ENCODE measurements at regions of chr9 and their contacts with region 1.

Region 1: DNA sequence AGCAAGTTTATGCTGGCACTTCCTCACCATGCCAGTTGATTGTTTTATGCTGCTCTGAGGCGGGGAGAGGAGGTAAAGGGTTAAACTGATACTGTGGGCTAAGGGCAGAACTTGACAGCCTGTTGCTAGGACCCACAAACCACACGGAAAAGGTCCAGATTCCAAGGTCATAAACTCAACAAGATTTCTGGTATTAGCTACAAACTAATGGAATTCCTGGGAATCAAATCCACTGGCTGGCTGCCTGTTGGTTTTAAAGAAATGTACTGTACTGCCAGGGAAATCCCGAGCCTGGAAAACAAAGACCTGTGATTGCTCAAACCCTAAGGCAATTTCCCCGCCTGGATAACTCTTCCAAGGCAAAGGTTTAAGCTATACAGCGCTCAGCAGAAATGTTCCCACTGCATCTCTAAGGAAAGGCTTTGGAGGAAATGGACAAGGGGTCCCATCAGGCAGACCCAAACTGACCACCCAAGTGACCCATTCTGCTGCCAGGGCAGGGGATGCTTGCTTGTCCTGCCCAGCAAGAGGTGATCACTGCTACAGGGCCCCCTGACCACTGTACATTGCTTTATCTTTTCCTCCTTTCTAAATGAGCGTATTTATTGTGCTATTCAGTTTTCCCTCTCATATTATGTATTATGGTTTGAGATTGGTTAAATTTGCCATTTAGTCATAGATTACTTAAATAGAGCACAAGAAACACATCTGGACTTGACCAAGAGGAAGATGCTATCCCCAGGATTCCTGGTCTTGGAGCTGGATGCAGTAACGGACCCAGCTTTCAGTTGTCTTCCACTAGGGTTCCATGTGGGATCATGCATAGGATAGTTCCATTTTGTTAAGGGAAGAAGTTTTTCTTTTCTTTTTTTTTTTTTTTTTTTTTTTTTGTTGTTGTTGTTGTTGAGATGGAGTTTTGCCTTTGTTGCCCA is 124.3 kb downstream of the SUSD1 start:
- DNase-seq: no peak
- CTCF ChIP-seq: no peak

Region 2: GRCh38 chr9:112028280-112029221 is 22.3 kb before region 1 on chr9:
- CTCF ChIA-PET with region 1: interaction called, 8 read pairs
- POLR2A ChIA-PET with region 1: interaction called, 12 read pairs
- DNase-seq: peak; percentile 57
- CTCF ChIP-seq: no peak

Region 3: DNA sequence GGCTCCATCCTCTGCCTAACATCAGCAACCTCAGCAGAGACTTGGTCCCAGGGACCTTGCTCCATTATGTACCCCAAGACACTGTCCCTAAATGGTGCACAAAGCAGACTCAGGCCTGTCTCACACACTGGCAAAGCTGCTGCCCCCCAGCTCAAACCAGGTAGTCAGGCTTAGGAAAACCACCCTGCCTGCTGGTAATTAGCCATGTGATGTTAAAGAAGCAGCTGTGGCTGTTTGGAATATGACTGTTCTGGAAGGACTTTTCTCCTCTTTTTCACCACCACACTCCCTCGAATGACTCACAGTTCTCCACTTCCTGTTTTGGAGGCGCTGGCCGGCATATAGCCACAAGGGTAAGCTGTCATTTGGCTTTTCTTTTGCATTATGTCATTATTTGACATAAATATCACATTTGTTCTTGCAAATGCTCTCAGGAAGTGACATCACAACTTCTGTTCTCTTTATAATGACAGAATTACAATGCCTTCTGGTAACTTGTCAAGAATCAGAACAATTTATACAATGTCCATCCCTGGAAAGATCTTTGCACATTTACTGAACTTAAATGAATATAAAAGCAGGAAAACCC is 10.4 kb after region 1 on chr9:
- CTCF ChIA-PET with region 1: interaction called, 10 read pairs
- POLR2A ChIA-PET with region 1: interaction called, 7 read pairs
- DNase-seq: peak; percentile 72
- CTCF ChIP-seq: no peak